Activated CD8-positive, alpha-beta T cell treated with anti-CD3 and anti-CD28 coated beads, Interleukin-2, amount 10 ng/mL, durations not matched to agents 7 days and 5 days (primary cell): ENCODE measurements at regions of chr15 and their contacts with region 1.

Region 1: DNA sequence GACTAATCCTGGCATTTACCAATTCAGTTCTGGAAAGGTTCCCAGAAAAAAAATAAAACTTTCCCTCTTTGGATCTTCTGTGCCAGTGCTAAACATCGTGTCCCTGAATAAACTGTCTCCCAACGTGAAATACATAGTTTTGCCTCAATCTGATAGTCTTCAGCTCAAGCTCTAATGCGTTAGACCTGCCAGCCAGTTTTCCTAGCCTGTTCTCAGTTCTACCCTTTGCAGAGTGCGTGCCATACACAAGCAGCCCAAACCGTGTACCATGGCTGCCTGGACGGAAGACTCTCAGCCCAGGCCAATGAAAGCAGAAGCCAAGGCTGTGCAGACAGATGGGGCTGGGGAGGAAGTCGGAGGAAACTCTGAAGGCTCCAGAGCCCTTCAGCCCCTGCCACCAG is 11.4 kb upstream of the OCA2 start:
- DNase-seq: no peak
- ATAC-seq: no peak
- H3K4me3 Mint-ChIP-seq: no peak overlapping the region
- H3K27ac Mint-ChIP-seq: no peak overlapping the region
- H3K4me1 Mint-ChIP-seq: peaks cover 14% of the 10 kb centered on the region
- H3K27me3 Mint-ChIP-seq: peaks cover 15% of the 10 kb centered on the region

Region 2: GRCh38 chr15:28125673-28126651 is 15.5 kb after region 1 on chr15:
- CTCF ChIA-PET with region 1: interaction called, 10 read pairs
- POLR2A ChIA-PET with region 1: no interaction called
- DNase-seq: peak; percentile 35
- ATAC-seq: peak; percentile 43
- H3K4me3 Mint-ChIP-seq: no peak overlapping the region
- H3K27ac Mint-ChIP-seq: no peak overlapping the region
- H3K4me1 Mint-ChIP-seq: peaks cover 5% of the 10 kb centered on the region
- H3K27me3 Mint-ChIP-seq: no peaks in the 10 kb centered on the region